OCI-LY7 (cell line): ENCODE measurements at regions of chr18 and their contacts with region 1.

Region 1: GRCh38 chr18:54444319-54444914 is 86.7 kb downstream of the C18orf54 start:
- DNase-seq: peak; percentile 40
- H3K4me3 ChIP-seq: no peak overlapping the region
- H3K27ac ChIP-seq: no peak overlapping the region
- H3K4me1 ChIP-seq: no peaks in the 10 kb centered on the region
- CTCF ChIP-seq: peak; percentile 83

Region 2: GRCh38 chr18:54405290-54405689 is 39.1 kb before region 1 on chr18:
- CTCF ChIA-PET with region 1: no interaction called
- POLR2A ChIA-PET with region 1: no interaction called
- intact Hi-C with region 1: no loop called
- DNase-seq: no peak
- H3K4me3 ChIP-seq: no peak overlapping the region
- H3K27ac ChIP-seq: no peak overlapping the region
- H3K4me1 ChIP-seq: no peaks in the 10 kb centered on the region
- CTCF ChIP-seq: no peak

Region 3: GRCh38 chr18:54506516-54507261 is 62.3 kb after region 1 on chr18:
- CTCF ChIA-PET with region 1: no interaction called
- POLR2A ChIA-PET with region 1: no interaction called
- intact Hi-C with region 1: loop called (anchors 10 kb)
- DNase-seq: peak; percentile 11
- H3K4me3 ChIP-seq: no peak overlapping the region
- H3K27ac ChIP-seq: peak overlapping the region; percentile 11
- H3K4me1 ChIP-seq: peaks cover 12% of the 10 kb centered on the region
- CTCF ChIP-seq: no peak

Region 4: DNA sequence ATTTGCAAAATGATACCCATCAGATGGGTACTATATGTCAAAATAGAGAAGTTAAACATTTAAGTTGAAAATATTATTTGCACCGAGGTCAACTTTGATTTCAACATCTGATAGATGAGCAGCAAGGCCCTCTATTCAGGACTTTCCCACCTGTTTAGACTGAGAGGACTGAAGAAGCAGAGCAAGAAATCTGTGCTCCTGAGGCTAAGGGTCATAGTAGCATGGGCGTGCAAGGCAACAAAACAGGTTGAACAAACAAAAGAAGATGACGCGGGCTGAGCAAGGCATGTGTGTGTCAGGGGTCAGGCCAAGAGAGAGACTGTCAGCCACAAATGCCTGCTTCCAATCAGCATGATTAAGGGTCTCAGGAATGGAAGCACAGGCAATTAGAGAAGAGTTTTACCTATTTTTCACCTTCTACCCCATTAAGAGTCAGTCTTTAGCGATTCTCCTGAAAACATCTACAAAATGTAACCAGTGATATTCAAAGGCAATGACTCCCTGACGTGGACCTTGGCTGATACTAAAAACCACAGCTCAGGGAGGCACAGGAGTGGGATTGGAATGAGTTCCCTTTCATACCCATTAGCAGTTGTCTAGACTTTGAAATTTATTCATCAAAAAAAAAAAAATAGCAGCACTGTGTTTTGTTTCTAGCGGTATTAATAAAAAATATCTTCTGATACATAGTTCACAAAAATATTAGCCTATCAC is 228.5 kb after region 1 on chr18:
- CTCF ChIA-PET with region 1: no interaction called
- POLR2A ChIA-PET with region 1: no interaction called
- intact Hi-C with region 1: loop called (anchors 2 kb)
- DNase-seq: no peak
- H3K4me3 ChIP-seq: no peak overlapping the region
- H3K27ac ChIP-seq: no peak overlapping the region
- H3K4me1 ChIP-seq: no peaks in the 10 kb centered on the region
- CTCF ChIP-seq: no peak